ENCODE measurements at regions of chr18 and their contacts with region 1.

Region 1: DNA sequence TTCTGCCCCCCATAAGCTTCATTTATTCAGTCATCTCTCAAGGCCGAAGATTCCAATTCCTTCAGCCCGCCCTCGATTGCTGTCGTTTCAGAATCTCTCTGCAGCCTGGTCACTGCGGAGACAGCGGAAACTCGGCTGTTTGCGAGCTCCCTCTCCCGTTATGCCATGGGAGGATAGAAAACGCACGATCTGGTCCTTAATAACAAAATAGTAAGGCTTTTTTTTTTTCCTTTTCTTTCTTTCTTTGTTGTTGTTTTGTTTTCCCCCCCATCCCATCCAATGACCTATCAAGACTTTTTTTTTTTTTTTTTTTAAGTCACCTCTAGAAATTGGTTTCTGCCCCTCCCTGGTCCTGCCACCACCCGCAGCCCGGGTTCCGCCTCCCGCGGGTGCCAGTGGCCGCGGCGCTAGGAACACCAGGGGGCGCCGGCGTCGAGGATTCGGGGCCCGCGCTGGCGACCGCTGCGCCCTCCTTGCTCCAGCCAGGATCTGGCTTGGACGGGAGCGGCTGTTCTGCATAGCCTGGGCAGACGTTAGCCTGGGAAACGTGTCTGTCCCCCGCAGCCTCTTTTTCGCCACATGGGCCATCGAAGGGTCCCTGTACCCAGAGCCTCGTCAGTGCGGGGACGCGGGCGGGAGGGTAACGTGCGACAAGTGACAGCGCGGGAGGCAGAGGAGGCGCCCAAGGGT is 10.1 kb downstream of the CPLX4 start:
- DNase-seq: no peak
- H3K4me3 ChIP-seq: peak overlapping the region; percentile 48
- CTCF ChIP-seq: peak; percentile 97

Region 2: GRCh38 chr18:59012815-59013677 is 295.3 kb before region 1 on chr18:
- CTCF ChIA-PET with region 1: no interaction called
- POLR2A ChIA-PET with region 1: no interaction called
- DNase-seq: no peak
- H3K4me3 ChIP-seq: no peak overlapping the region
- CTCF ChIP-seq: no peak

Region 3: DNA sequence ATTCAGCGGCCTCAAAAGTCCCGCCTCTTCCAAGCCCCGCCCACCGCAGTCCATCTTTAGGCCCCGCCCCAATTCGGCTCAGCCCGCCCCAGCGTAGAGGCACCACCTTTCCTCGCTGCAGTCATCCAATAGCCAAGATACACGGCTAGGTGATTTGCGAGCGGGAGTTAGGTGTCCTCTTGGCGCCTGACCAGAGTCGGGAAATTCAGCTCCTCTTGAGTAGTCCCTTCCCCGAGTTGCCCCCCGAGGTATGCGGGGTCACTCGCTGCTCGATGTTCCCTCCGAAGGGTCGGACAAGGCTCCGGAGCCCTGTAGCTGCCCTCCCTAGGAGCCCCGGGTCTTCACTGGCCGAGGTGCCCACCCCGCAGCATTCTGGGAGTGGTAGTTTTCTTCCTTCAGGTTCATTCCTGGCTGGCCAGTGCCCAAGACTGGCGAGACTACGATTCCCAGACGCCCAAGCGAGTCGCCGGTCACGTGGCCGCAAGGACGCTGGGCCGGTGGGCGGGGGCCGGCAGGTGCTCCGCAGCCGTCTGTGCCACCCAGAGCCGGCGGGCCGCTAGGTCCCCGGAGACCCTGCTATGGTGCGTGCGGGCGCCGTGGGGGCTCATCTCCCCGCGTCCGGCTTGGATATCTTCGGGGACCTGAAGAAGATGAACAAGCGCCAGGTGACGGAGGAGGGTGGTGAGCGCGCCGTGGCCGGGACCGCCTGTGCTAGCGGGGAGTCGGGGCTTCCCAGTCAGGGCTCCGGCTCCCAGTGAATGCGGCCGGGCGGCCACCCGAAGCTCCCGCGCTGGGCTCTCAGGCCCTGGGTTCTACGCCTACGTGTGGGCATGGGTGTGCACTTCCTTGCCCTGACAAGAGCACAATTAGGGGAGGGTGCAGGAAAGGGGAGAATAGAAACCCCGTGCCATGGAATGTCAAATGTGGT is 168.8 kb before region 1 on chr18 and contains the start of gene SEC11C:
- CTCF ChIA-PET with region 1: no interaction called
- POLR2A ChIA-PET with region 1: no interaction called
- DNase-seq: peak; percentile 65
- H3K4me3 ChIP-seq: peak within 1 kb of the TSS; percentile 78
- CTCF ChIP-seq: no peak

Region 4: GRCh38 chr18:59286341-59286740 is 22.1 kb before region 1 on chr18:
- CTCF ChIA-PET with region 1: interaction called, 14 read pairs
- POLR2A ChIA-PET with region 1: no interaction called
- DNase-seq: no peak
- H3K4me3 ChIP-seq: no peak overlapping the region
- CTCF ChIP-seq: no peak

Region 5: DNA sequence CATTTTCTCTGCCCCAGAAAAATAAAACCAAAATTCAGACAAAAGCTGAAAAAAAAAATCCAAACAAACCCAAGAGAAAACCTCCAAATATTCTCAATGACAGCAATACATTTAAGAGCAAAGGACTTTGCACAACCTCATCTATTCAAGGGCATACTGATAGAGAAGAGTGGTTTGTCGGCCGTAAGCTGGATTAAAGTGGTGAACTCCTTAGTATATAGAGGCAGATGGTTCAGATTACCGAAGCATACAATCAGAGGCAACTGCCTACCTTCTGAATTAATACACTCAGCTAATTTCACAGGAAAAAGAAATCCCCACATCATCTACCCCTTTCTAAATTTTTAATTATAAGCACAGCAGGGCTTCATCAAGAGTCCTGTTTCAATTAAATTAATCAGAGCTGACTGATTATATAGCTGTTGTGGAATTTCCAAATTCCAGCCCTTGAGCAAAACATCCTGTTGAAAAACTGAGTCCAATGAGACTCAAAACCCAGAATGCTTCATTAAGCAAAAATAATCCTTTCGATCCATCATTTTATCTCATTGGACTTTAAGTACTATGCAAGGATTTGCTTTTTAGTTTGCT is 10.2 kb after region 1 on chr18 and contains the start of gene CPLX4:
- CTCF ChIA-PET with region 1: interaction called, 25 read pairs
- POLR2A ChIA-PET with region 1: no interaction called
- DNase-seq: no peak
- H3K4me3 ChIP-seq: no peak within 1 kb of the TSS
- CTCF ChIP-seq: no peak

Region 6: GRCh38 chr18:59387687-59388565 is 79.5 kb after region 1 on chr18:
- CTCF ChIA-PET with region 1: interaction called, 21 read pairs
- POLR2A ChIA-PET with region 1: no interaction called
- DNase-seq: no peak
- H3K4me3 ChIP-seq: no peak overlapping the region
- CTCF ChIP-seq: no peak

Measured in AG04449 (cell line).